ENCODE measurements at regions of chr17 and their contacts with region 1.

Region 1: GRCh38 chr17:58127861-58128260 is 20.3 kb upstream of the OR4D1 start:
- DNase-seq: no peak
- H3K4me3 ChIP-seq: no peak overlapping the region
- H3K27ac ChIP-seq: no peak overlapping the region
- H3K4me1 ChIP-seq: no peaks in the 10 kb centered on the region
- H3K27me3 ChIP-seq: peaks cover 3% of the 10 kb centered on the region
- CTCF ChIP-seq: no peak

Region 2: DNA sequence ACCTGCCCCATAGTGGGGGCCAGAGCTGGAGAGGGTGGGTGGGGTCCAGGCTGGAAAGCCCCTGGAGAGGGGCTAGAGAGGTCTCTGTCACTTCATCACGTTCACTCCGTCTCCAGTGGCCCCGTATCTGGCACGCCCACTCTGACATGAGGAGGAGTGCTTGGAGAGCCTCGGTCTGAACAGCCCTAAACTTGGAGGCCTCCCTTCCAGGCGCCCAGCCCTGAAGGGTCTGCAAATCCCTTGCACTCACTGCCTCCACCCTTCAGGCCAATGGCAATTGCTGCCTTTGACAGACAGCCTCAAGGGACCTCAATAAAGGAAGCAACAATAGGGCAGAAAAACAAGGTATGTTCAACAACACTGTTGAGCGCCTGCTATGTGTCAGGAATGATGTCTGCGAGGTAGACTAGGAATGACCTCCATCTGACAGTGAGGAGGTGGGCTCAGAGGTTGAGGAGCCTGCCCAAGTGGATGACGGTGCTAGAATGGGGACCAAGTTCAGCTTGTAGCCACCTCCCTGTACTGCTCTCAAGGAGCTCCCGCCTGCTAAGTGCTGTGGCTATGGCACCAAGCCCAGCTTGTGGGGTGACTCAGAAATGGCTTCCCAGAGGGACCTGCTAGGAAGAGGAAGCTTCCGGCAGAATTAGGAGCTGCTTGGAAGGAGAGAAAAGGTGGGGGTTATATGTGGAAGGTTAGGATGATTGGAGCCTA is 61.7 kb after region 1 on chr17:
- CTCF ChIA-PET with region 1: no interaction called
- dilution Hi-C with region 1: loop called (anchors 5 kb)
- in situ Hi-C with region 1: no loop called
- intact Hi-C with region 1: no loop called
- DNase-seq: peak; percentile 76
- H3K4me3 ChIP-seq: no peak overlapping the region
- H3K27ac ChIP-seq: no peak overlapping the region
- H3K4me1 ChIP-seq: peaks cover 11% of the 10 kb centered on the region
- H3K27me3 ChIP-seq: no peaks in the 10 kb centered on the region
- CTCF ChIP-seq: no peak